ENCODE measurements at regions of chr1 and their contacts with region 1.

Region 1: DNA sequence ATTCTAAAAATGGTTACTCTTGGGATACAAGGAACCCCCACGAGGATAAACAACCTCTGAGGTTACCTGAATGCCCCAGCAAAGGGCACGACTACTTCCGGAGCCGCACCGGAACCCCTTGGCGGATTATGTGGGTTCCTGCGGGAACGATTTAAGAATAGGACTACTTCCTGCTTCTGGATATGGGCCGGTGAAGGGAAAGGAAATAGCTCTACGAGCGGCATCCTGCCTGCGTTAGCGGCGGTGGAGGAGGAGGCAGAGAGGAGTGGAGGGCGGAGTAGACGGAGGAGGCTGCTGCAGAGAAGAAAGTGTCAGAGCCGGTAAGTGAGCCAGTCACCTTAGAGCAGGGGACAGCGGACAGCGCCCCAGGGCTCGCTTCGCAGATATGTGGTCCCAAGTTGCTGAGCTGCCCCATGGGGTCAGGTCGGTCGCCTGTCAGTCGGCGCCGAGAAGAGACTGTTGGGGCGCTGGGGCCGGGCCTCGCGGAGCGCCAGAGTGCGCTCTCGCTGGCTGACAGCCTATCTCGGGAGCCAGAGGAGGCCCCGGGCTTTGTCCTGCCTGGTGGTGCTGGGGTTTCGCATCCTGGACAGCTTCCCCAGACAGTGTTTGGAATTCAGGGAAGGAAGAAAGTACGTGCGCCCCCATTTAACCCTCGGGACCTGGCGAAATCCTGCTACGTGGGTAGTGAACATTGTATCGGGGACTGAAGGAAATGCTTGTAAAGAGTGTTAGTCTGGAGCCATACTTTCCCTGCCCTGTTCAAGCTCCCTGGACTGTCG is at the start of gene KLHL20:
- DNase-seq: peak; percentile 92
- H3K4me3 Mint-ChIP-seq: peak within 1 kb of the TSS; percentile 96
- H3K27ac Mint-ChIP-seq: peak within 1 kb of the TSS; percentile 92
- H3K4me1 Mint-ChIP-seq: peaks cover 31% of the 10 kb centered on the region
- H3K27me3 Mint-ChIP-seq: peaks cover 14% of the 10 kb centered on the region
- total RNA-seq, gene KLHL20: 12.9 to 14.9 TPM

Region 2: DNA sequence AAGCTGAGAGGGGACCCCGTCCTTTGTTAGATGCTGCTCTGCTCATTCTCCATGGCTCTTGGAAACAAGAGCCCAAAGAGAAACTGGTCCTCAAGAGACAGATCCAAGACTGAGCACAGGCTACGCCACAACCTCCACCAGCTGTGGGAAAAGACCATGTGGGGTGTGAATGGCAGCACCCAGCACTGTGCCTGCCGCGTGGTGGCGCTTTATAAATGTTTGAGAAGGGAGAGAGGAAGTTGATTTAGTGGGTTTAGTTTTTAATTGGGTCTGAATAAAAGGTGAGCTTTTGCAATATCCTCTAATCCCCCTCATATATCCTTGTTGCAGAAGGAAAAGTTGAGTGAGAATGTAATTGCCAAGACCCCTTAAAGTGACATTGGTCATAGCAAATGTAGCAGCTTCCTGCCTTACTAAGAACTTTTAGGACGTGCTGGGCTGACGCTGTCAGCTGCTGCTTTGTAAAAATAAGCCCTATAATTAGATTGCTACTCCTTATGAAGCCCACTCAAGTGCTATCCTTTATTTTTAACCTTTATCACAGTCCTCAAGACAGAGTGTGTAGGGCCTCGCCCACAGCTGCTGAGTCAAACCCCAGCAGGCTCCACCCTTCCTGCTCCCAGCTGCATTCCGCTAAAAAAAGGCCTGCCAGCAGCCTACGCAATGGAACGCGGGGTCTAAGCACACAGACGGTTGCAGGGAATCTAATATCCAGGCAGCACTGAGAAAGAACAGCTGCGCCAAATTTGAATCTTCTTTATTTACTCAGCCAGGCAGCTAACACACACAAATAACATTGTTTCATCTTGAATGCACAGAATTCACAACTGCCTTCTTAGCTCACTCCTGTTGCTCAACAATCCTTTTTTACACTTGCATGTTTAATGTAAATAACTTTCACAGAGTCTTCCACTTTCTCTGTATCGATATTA is 285.2 kb before region 1 on chr1:
- CTCF ChIA-PET with region 1: interaction called, 22 read pairs
- POLR2A ChIA-PET with region 1: interaction called, 5 read pairs
- intact Hi-C with region 1: loop called (anchors 1 kb)
- DNase-seq: peak; percentile 79
- H3K4me3 Mint-ChIP-seq: peak overlapping the region; percentile 20
- H3K27ac Mint-ChIP-seq: peak overlapping the region; percentile 55
- H3K4me1 Mint-ChIP-seq: peaks cover 19% of the 10 kb centered on the region
- H3K27me3 Mint-ChIP-seq: no peaks in the 10 kb centered on the region

Region 3: GRCh38 chr1:173476664-173477285 is 238.2 kb before region 1 on chr1:
- CTCF ChIA-PET with region 1: interaction called, 8 read pairs
- POLR2A ChIA-PET with region 1: interaction called, 8 read pairs
- intact Hi-C with region 1: loop called (anchors 1 kb)
- DNase-seq: peak; percentile 90
- H3K4me3 Mint-ChIP-seq: peak overlapping the region; percentile 84
- H3K27ac Mint-ChIP-seq: peak overlapping the region; percentile 90
- H3K4me1 Mint-ChIP-seq: peaks cover 53% of the 10 kb centered on the region
- H3K27me3 Mint-ChIP-seq: no peaks in the 10 kb centered on the region

Region 4: GRCh38 chr1:173771560-173771959 is 56.6 kb after region 1 on chr1:
- CTCF ChIA-PET with region 1: no interaction called
- POLR2A ChIA-PET with region 1: no interaction called
- intact Hi-C with region 1: loop called (anchors 2 kb)
- DNase-seq: no peak
- H3K4me3 Mint-ChIP-seq: no peak overlapping the region
- H3K27ac Mint-ChIP-seq: no peak overlapping the region
- H3K4me1 Mint-ChIP-seq: peaks cover 28% of the 10 kb centered on the region
- H3K27me3 Mint-ChIP-seq: no peaks in the 10 kb centered on the region

Region 5: DNA sequence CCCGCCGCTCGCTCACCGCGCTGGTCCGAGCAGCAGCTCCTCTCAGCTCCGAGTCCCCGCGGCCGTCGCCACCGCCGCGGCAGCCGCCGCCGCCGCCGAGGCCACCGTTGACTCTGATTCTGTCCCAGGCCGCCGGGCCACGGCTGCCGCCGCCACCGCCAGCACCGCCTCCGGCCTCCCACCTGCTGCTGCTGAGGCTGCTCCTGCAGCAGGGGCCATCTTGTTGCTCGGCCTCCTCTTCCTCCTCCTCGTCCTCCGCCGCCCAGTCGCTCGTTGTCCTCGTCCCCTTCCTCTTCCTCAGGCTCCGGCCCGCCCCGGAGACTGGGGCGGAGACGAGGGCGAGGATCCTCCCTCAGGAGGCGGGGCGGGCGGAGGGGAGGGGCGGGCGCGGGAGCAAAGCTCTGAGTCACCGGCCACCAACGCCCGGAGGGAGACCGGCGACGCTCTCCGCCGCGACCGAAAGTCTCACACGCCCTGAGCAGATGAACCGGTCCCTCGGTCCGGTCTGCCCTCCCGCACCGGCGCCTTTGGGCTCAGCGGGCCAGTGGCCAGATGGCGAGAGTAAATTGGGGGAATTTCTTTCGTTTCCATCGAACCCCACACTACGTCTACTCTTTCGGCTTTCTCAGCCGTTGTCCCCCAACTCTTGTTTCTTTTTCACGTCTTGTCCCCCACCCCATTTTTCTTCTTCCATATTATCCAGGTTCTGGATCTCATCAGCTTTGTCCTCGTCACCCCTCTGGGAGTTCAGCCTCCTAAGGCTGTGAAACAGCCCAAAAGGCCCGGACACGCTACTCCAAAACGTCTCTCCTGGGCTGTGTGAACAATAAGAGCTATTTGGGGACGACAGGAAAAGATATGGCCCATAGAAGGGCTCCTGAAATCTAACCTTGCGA is 307.4 kb after region 1 on chr1 and contains the start of gene RC3H1:
- CTCF ChIA-PET with region 1: no interaction called
- POLR2A ChIA-PET with region 1: no interaction called
- intact Hi-C with region 1: loop called (anchors 2 kb)
- DNase-seq: peak; percentile 94
- H3K4me3 Mint-ChIP-seq: peak within 1 kb of the TSS; percentile 97
- H3K27ac Mint-ChIP-seq: peak within 1 kb of the TSS; percentile 93
- H3K4me1 Mint-ChIP-seq: peaks cover 38% of the 10 kb centered on the region
- H3K27me3 Mint-ChIP-seq: no peaks in the 10 kb centered on the region
- total RNA-seq, gene RC3H1: 26.6 to 26.8 TPM